Panc1 (cell line): ENCODE measurements at regions of chr1 and their contacts with region 1.

Region 1: GRCh38 chr1:39398278-39399021 is 93.0 kb upstream of the BMP8A start:
- DNase-seq: peak; percentile 95
- ATAC-seq: peak; percentile 93
- H3K4me3 ChIP-seq: peak overlapping the region in 1 of 2 experiments; percentile 29; a peak in 2 of 4 replicates
- H3K27ac ChIP-seq: peak overlapping the region; percentile 94
- H3K4me1 ChIP-seq: peaks cover 65% of the 10 kb centered on the region
- H3K27me3 ChIP-seq: no peaks in the 10 kb centered on the region
- CTCF ChIP-seq: no peak

Region 2: GRCh38 chr1:39408641-39409054 is 10.2 kb after region 1 on chr1:
- CTCF ChIA-PET with region 1: interaction called, 6 read pairs
- POLR2A ChIA-PET with region 1: interaction called, 17 read pairs
- in situ Hi-C with region 1: no loop called
- intact Hi-C with region 1: no loop called
- DNase-seq: no peak
- ATAC-seq: peak; percentile 87
- H3K4me3 ChIP-seq: peak overlapping the region; percentile 71 to 95
- H3K27ac ChIP-seq: peak overlapping the region; percentile 100; the same call in 1 of the 2 replicates
- H3K4me1 ChIP-seq: peaks cover 72% of the 10 kb centered on the region
- H3K27me3 ChIP-seq: no peaks in the 10 kb centered on the region
- CTCF ChIP-seq: no peak

Region 3: DNA sequence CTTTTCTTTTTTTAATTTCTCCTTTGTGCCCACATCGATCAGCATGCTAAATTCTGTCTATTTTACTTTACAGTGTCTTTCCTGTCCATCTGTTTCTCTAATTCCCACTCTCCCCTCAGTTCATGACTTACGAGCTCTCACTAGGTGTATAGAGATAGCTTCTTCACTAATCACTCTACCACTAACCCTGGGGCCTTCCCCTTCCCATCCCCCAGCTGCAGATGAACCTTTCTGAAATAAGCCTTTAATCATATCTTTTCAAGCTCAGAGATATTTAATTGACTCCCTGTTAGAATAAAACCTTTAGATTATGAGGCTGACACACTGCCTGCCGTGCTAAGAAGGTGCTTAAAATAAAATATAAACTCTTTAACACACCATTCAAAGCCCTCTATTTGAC is 26.7 kb after region 1 on chr1:
- CTCF ChIA-PET with region 1: interaction called, 3 read pairs
- POLR2A ChIA-PET with region 1: interaction called, 10 read pairs
- in situ Hi-C with region 1: no loop called
- intact Hi-C with region 1: no loop called
- DNase-seq: no peak
- ATAC-seq: no peak
- H3K4me3 ChIP-seq: no peak overlapping the region
- H3K27ac ChIP-seq: no peak overlapping the region
- H3K4me1 ChIP-seq: no peaks in the 10 kb centered on the region
- H3K27me3 ChIP-seq: no peaks in the 10 kb centered on the region
- CTCF ChIP-seq: no peak